ENCODE measurements at regions of chr7 and their contacts with region 1.

Region 1: DNA sequence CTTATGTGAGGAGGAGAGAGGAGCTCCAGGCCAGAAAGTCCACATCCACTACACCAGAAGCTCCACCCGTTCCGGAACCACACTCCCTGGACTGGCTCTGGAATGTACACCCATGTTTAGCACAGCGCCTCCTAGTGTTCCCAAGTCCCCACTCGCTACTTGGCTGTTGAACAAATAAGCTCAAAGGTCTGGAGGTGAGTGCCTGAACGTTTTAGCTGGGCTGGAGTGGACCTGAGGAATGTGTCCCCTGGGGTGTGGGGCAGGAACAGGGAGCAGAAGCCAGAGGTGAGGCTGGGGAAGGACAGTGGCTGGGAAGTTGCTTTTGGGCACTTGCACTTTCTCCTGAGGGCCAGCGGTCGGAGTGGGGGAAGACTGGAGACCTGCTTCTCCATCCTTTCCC is 164.1 kb upstream of the CDCA7L start:
- DNase-seq: peak; percentile 52
- H3K4me3 ChIP-seq: no peak overlapping the region
- H3K27ac ChIP-seq: no peak overlapping the region
- H3K4me1 ChIP-seq: no peaks in the 10 kb centered on the region
- H3K27me3 ChIP-seq: no peaks in the 10 kb centered on the region

Region 2: DNA sequence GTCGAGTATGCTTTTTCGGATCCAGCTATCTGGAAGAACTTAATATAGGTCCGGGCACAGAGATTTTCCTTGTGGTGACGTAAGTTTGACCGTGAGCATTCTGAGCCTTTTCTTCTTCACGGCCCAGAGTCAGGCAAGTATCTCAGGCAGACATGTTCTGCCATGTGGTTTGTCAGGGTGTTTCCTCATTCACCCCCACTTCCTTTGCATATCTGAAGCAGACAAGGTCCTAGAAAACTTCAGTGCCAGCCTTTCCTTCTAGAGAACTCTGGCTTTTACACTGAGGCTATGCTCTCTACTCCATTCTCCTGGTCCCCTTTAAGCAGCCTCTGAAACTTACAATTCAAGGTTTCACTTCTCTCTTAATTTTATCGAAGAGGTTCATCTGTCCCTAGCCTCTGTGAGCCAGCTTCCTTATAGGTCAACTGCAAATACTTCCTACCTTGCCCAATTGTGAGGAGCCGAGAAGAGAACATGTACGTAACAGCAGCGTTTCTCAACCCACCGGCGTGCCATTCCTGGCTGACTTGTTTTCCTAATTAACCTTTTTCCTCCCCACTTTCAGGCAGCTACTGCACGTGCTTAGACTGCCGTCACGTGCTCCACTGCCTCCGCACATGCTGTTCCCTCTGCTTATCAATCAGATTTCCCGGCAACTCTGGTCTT is 211.4 kb before region 1 on chr7:
- in situ Hi-C with region 1: no loop called
- DNase-seq: no peak
- H3K4me3 ChIP-seq: no peak overlapping the region
- H3K27ac ChIP-seq: no peak overlapping the region
- H3K4me1 ChIP-seq: no peaks in the 10 kb centered on the region
- H3K27me3 ChIP-seq: no peaks in the 10 kb centered on the region

Region 3: DNA sequence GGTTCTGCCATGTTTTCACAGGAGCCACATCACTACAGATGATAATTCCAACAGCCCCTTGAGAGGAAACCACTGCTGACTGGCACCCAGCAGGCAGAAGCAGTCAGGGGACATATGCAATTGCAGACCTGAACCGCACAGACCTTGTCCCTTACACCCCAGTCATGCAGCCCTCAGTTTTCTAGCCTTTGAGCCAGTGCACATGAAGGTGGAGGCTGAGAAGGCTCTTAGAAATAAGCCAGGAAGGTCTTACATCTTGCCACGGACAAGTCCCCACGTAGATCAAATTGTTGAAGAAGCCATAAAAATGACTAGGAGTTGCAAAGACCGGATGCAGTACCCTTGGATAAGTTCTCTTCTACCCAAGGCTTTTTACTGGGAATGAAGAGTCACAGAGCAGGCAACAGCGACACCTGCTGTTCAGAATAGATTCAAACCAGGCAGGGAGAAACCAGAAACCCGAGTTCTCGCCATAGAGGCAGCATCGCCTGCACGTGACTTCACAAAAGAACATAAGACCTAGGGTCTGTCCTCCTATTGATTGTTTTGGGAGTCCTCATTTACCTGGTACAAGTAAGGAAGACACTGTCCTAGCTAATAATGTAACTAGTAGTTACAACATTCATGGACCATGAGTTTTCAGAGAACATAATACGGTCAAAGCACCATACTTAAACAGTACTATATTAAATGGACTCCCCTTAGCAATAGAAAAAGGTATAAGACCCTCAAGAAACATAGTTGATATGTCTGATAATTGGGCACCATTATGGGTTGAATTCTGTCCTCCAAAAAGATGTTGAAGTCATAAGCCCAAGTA is 379.1 kb after region 1 on chr7:
- in situ Hi-C with region 1: loop called (anchors 5 kb)
- DNase-seq: peak; percentile 78
- H3K4me3 ChIP-seq: no peak overlapping the region
- H3K27ac ChIP-seq: no peak overlapping the region
- H3K4me1 ChIP-seq: peaks cover 17% of the 10 kb centered on the region
- H3K27me3 ChIP-seq: no peaks in the 10 kb centered on the region

Measured in GM23248 (cell line).